PC-3 (cell line): ENCODE measurements at regions of chr7 and their contacts with region 1.

Region 1: GRCh38 chr7:135170274-135170997 is at the start of gene CYREN:
- DNase-seq: peak; percentile 94
- ATAC-seq: peak; percentile 90
- H3K4me3 ChIP-seq: peak within 1 kb of the TSS; percentile 94
- H3K27ac ChIP-seq: peak within 1 kb of the TSS; percentile 94
- H3K4me1 ChIP-seq: peaks cover 13% of the 10 kb centered on the region
- H3K27me3 ChIP-seq: no peaks in the 10 kb centered on the region
- CTCF ChIP-seq: peak; percentile 66
- total RNA-seq, gene CYREN: 48.2 and 66.8 TPM in 2 replicates

Region 2: DNA sequence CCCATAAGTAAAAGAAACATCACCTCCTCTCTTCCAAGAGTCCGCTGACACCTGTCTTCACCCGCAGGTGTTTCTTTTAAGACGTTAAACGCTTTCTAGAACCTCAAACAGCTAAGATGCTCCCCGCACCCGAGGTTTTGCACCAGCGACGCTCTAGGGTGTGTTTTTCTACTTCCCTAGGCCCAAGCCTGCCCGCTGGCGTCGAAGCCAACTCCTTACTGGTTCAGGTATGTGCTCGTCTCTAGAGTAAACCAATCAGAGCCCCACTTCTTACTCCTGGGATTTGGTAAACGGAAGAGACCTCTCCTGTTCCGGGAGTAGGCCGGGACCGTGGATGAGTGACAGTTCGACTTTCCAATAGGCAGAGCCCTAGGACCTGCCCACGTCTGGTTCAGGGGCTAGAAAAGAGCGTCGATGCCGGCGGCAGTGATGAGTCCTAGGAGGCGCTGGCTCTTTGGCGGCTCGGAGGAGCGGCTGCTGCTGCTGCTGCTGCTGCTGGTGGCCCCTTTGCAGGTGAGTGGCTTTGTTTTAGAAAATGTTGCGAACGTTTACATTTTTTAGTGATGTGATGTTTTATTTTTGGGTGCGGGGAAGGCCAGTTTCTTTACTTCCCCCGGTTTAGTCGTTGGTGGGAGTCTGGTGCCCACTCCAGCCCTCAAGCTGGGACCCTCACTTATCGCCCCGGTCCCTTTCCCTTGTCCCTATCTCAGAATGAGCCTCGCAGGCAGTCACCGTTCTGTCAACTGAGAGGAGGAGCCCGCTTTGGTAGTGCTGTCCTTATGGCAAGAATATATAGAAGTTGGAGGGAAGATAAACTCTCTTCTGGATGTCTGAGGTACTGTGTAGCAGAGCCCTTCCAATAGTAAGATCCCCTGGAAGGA is 523.8 kb before region 1 on chr7 and contains the start of gene BPGM:
- CTCF ChIA-PET with region 1: no interaction called
- POLR2A ChIA-PET with region 1: no interaction called
- intact Hi-C with region 1: loop called (anchors 10 kb)
- DNase-seq: peak; percentile 99
- ATAC-seq: peak; percentile 99
- H3K4me3 ChIP-seq: peak within 1 kb of the TSS; percentile 95
- H3K27ac ChIP-seq: peak within 1 kb of the TSS; percentile 34
- H3K4me1 ChIP-seq: peaks cover 10% of the 10 kb centered on the region
- H3K27me3 ChIP-seq: no peaks in the 10 kb centered on the region
- CTCF ChIP-seq: peak; percentile 45
- total RNA-seq, gene BPGM: 9.6 and 14.6 TPM in 2 replicates

Region 3: DNA sequence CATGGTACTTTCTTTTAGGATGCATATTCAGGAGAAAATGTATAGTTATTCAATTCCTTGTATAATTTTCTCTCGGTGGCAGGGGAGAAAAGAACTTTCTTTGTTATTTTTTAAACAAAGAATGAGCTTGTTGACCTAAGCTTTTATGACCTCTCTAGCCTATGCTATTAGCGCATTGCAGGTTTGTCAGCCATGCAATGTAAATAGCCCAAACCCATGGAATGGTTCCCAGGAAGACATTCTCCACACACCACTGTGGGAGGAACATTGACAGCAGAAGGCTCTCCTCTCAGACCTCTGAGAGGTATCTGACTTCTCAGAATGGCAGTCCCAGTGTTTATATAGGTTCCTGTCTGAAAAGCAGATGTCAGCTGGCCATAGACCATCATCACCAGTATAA is 203.8 kb before region 1 on chr7:
- CTCF ChIA-PET with region 1: no interaction called
- POLR2A ChIA-PET with region 1: interaction called, 7 read pairs
- intact Hi-C with region 1: loop called (anchors 5 kb)
- DNase-seq: peak; percentile 34
- ATAC-seq: peak; percentile 100
- H3K4me3 ChIP-seq: no peak overlapping the region
- H3K27ac ChIP-seq: no peak overlapping the region
- H3K4me1 ChIP-seq: no peaks in the 10 kb centered on the region
- H3K27me3 ChIP-seq: no peaks in the 10 kb centered on the region
- CTCF ChIP-seq: no peak

Region 4: GRCh38 chr7:134986363-134987251 is 183.8 kb before region 1 on chr7 and contains the start of gene AGBL3:
- CTCF ChIA-PET with region 1: interaction called, 3 read pairs
- POLR2A ChIA-PET with region 1: interaction called, 3 read pairs
- intact Hi-C with region 1: loop called (anchors 1 kb)
- DNase-seq: peak; percentile 94
- ATAC-seq: peak; percentile 98
- H3K4me3 ChIP-seq: peak within 1 kb of the TSS; percentile 87
- H3K27ac ChIP-seq: peak within 1 kb of the TSS; percentile 45
- H3K4me1 ChIP-seq: peaks cover 20% of the 10 kb centered on the region; the same call in 1 of the 2 replicates
- H3K27me3 ChIP-seq: no peaks in the 10 kb centered on the region
- CTCF ChIP-seq: peak; percentile 74
- total RNA-seq, gene AGBL3: 1.9 and 2.5 TPM in 2 replicates

Region 5: GRCh38 chr7:135083005-135083404 is 87.4 kb before region 1 on chr7:
- CTCF ChIA-PET with region 1: no interaction called
- POLR2A ChIA-PET with region 1: no interaction called
- intact Hi-C with region 1: no loop called
- DNase-seq: no peak
- ATAC-seq: no peak
- H3K4me3 ChIP-seq: no peak overlapping the region
- H3K27ac ChIP-seq: no peak overlapping the region
- H3K4me1 ChIP-seq: no peaks in the 10 kb centered on the region
- H3K27me3 ChIP-seq: peaks cover 15% of the 10 kb centered on the region
- CTCF ChIP-seq: no peak

Region 6: DNA sequence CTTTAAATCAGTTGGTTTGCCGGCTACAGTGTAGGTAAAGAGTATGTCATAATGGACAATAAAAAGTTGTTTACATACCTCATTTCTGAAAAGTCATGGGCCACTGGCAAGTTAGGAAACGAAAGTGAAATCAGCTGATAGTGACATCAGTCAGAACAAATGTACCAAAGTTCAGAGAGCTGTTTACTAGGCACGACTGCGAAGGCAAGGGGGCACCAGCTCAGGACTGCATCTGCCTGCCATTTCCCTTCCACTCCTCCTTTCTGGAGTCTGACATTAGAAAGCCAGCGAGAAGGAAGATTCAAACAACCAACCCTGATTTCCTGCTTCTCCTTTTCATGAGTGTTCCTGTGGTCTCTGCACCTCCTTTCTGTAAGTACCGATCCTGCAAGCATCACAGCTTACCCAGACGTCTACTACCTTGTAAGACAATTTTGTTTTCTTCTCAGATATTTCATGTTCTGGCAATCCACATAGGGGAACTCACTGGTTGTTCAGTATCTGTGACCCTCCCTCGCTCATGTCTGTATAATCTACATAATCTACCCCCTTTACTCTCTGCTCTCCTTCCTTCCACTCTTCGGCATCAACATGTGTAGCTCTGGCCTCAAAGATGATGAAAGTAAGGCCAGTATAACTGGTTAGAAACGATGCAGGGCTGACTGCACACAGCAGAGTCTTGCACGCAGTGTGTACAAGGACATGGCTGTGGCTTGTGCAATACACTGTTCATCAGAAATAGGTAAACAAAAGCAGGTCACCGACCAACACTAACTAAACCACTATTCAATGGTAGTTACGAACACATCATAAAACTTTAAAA is 22.3 kb before region 1 on chr7 and contains the start of gene TMEM140:
- CTCF ChIA-PET with region 1: no interaction called
- POLR2A ChIA-PET with region 1: no interaction called
- intact Hi-C with region 1: loop called (anchors 1 kb)
- DNase-seq: peak; percentile 75
- ATAC-seq: peak; percentile 80
- H3K4me3 ChIP-seq: peak within 1 kb of the TSS; percentile 64
- H3K27ac ChIP-seq: peak within 1 kb of the TSS; percentile 76
- H3K4me1 ChIP-seq: peaks cover 22% of the 10 kb centered on the region
- H3K27me3 ChIP-seq: no peaks in the 10 kb centered on the region
- CTCF ChIP-seq: no peak
- total RNA-seq, gene TMEM140: 0.52 TPM in 1 of 2 replicates, not detected in the other

Region 7: DNA sequence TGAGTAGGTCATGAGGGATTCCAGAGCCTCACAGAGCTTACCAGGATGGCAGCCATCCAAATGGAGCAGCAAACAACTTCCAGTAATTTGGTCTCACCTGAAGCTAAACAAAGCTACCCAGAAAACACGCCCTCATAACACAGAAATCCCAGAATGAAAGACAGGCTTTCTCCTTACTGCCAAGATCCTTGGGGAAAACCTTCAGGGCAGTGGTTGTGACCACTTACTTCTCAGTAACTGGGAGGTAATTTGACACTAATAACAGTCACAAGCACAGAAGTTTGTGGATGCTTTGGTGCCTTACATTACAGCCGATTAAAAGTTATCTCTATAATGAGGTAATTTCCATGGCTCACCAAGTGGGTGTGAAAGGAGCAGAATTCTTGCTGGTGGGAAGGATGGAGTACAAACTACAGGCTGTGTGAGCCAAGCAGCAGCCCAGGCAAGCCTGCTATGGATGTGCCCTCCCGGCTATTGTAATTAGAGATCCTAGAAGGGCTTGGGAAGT is 30.4 kb after region 1 on chr7:
- CTCF ChIA-PET with region 1: no interaction called
- POLR2A ChIA-PET with region 1: no interaction called
- intact Hi-C with region 1: no loop called
- DNase-seq: no peak
- ATAC-seq: no peak
- H3K4me3 ChIP-seq: no peak overlapping the region
- H3K27ac ChIP-seq: no peak overlapping the region
- H3K4me1 ChIP-seq: no peaks in the 10 kb centered on the region
- H3K27me3 ChIP-seq: no peaks in the 10 kb centered on the region
- CTCF ChIP-seq: no peak

Region 8: DNA sequence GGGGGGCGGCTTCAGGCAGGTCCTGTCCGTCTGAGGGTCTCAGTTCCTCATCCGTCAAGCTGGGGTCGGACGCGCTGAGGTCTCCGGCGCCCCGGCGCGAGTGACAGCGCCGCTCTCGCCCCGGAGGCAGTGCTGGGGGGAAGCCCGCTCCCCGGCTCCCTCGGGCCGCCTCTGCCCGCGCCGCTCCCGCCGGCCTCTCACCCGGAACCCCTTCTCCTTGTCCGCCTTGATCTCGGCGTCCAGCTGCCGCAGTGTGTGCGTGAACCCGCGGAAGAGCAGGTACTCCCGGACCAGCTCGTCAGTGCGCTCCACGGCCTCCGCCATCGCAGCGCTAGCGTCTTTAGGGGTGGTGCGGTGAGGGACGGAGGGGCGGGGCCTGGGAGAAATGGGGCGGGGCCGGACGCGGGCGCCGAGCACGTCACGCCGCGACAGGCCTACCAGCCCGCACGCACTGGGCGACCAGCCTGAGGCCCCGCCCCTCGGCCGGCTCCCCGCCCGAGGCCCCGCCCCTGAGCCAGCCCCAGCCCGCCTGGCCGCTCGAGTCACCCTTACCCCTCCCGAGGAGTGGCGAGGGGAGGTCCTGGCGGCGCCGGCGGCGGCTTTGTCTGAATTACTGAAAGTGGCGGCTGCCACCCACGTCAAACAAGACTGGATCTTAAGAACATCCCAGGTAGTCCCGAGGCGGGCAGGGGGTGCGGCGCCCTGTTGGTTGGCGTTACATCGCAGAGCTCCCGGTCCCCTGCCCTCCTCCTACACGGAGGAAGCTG is 40.9 kb after region 1 on chr7 and contains the start of gene WDR91:
- CTCF ChIA-PET with region 1: no interaction called
- POLR2A ChIA-PET with region 1: interaction called, 13 read pairs
- intact Hi-C with region 1: loop called (anchors 2 kb)
- DNase-seq: peak; percentile 91
- ATAC-seq: peak; percentile 90
- H3K4me3 ChIP-seq: peak within 1 kb of the TSS; percentile 100
- H3K27ac ChIP-seq: no peak within 1 kb of the TSS
- H3K4me1 ChIP-seq: peaks cover 8% of the 10 kb centered on the region; the same call in 1 of the 2 replicates
- H3K27me3 ChIP-seq: no peaks in the 10 kb centered on the region
- CTCF ChIP-seq: peak; percentile 28; the same call in 1 of the 2 replicates
- total RNA-seq, gene WDR91: 12.3 and 23.0 TPM in 2 replicates

Region 9: GRCh38 chr7:135253898-135254771 is 83.7 kb after region 1 on chr7:
- CTCF ChIA-PET with region 1: no interaction called
- POLR2A ChIA-PET with region 1: no interaction called
- intact Hi-C with region 1: loop called (anchors 5 kb)
- DNase-seq: peak; percentile 74
- ATAC-seq: peak; percentile 98
- H3K4me3 ChIP-seq: no peak overlapping the region
- H3K27ac ChIP-seq: peak overlapping the region; percentile 47
- H3K4me1 ChIP-seq: peaks cover 22% of the 10 kb centered on the region
- H3K27me3 ChIP-seq: no peaks in the 10 kb centered on the region
- CTCF ChIP-seq: no peak